ENCODE measurements at regions of chr1 and their contacts with region 1.

Region 1: GRCh38 chr1:36223993-36224536 is at the start of gene THRAP3:
- DNase-seq: peak; percentile 100
- H3K4me3 Mint-ChIP-seq: peak within 1 kb of the TSS; percentile 94
- H3K27ac Mint-ChIP-seq: peak within 1 kb of the TSS; percentile 99
- H3K4me1 Mint-ChIP-seq: peaks cover 32% of the 10 kb centered on the region
- H3K27me3 Mint-ChIP-seq: no peaks in the 10 kb centered on the region
- total RNA-seq, gene THRAP3: 128 to 133 TPM

Region 2: DNA sequence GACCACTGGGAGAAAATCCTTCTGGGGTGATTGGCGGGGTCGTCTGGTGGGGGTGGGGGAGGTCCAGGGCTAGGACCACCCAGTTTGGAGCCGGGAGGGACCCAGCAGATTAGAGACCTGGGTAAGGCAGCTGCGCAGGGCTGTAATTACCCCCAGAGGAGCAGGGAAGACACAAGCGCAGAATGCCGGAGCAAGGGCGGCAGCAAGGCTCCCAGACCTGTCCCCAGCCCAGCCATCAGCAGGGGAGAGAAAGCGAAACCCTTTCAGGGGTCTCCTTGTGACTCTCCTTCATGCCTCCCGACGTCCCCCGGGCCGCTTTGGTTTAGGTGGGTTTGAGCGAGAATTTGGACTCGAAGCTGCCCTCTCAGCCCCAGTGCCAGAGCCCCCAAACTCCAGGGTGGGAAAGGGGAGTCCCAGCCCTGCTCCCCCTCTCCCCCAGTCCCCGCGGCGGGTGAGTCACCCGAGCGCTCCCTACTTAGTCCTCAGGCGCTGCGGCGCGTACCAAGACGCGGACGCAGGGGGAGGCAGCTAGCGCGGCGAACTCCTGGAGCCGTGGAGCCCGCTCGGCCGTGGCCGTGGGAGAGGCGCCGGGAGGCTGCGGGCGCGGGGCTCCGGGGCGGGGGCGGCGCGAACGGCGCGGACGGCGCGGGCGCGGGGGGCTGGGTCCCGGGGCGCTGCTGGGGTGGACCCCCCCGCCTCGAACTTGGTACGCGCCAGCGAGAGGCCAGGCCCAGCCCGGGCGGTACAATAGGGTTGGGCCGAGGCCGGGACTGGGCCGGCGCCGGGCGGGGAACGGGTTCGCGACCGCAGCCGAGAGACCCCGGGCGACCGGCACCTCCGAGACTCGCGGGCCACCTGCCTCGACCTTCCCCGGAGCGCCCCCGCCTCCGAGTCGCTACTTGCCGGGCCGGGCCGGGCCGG is 68.4 kb before region 1 on chr1 and contains the start of gene MAP7D1:
- CTCF ChIA-PET with region 1: interaction called, 46 read pairs
- POLR2A ChIA-PET with region 1: interaction called, 72 read pairs
- DNase-seq: peak; percentile 86
- H3K4me3 Mint-ChIP-seq: peak within 1 kb of the TSS; percentile 88
- H3K27ac Mint-ChIP-seq: peak within 1 kb of the TSS; percentile 88
- H3K4me1 Mint-ChIP-seq: peaks cover 72% of the 10 kb centered on the region
- H3K27me3 Mint-ChIP-seq: no peaks in the 10 kb centered on the region
- total RNA-seq, gene MAP7D1: 215 to 221 TPM

Region 3: DNA sequence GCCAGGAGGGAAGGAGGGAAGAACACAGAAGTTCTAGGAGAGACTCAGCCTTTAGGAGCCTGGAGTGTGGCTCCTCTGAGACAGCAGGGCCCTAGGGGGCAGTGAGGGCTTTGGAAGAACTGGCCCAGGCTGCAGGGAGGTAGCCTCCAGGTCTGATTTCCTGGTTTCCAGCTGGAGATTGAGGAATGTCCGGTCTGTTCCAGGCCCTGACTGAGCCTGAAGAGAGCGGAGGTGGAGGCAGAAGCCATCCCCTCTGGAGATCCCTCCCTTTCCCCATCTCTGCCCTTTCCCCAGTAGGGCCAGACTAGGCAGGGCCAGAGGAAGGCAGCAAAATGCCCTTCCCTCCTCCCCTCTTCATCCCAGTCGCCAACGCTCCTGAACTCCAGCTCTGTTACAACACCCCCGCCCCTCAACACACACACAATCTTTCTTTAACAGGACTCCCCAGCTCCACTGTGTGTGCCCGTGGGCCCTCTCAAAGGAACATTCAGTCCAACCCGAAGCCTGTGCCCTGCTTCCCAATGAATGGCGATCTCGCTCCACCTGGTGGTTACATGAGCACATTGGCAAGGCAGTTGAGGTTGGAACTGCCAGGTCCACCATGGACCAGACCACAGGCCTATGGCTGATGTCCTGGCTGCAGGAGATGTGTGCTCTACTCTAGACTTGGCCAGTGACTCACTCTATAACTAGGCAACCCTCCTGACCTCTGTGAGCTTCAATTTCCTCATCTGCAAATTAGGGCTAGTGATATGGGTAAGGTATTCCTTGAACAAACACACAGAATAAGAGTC is 36.1 kb before region 1 on chr1:
- CTCF ChIA-PET with region 1: interaction called, 3 read pairs
- POLR2A ChIA-PET with region 1: interaction called, 12 read pairs
- DNase-seq: peak; percentile 84
- H3K4me3 Mint-ChIP-seq: no peak overlapping the region
- H3K27ac Mint-ChIP-seq: peak overlapping the region; percentile 38
- H3K4me1 Mint-ChIP-seq: peaks cover 8% of the 10 kb centered on the region
- H3K27me3 Mint-ChIP-seq: no peaks in the 10 kb centered on the region

Region 4: GRCh38 chr1:36248250-36248894 is 24.3 kb after region 1 on chr1:
- CTCF ChIA-PET with region 1: no interaction called
- POLR2A ChIA-PET with region 1: interaction called, 14 read pairs
- DNase-seq: no peak
- H3K4me3 Mint-ChIP-seq: no peak overlapping the region
- H3K27ac Mint-ChIP-seq: peak overlapping the region; percentile 22
- H3K4me1 Mint-ChIP-seq: peaks cover 33% of the 10 kb centered on the region
- H3K27me3 Mint-ChIP-seq: no peaks in the 10 kb centered on the region

Region 5: DNA sequence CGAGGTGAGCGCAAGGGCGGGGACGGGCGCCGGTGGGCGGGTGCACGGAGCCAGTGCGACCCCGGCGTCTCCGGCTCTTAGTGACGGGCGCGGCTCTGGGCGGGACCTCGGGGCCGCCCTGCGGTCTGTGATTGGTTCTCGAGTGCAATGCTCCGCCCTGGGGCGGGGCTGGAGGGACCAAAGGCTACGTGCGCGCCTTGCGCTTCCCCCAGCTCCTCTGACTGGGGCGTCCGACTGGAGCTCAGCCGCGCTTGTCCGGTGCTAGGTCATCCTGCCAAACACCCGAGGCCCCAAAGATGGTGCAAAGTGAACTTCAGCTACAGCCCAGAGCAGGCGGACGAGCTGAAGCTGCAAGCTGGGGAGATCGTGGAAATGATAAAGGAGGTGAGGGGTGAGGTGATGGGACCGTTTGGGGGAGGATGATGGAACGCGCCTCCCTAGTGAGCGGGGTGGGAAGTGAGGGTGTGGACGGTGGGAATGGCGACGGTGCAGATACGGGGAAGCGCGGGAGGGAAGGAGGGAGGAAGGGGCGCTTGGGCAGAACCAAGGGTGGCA is 82.9 kb after region 1 on chr1:
- CTCF ChIA-PET with region 1: interaction called, 4 read pairs
- POLR2A ChIA-PET with region 1: interaction called, 14 read pairs
- DNase-seq: peak; percentile 93
- H3K4me3 Mint-ChIP-seq: peak overlapping the region; percentile 89
- H3K27ac Mint-ChIP-seq: peak overlapping the region; percentile 81
- H3K4me1 Mint-ChIP-seq: peaks cover 40% of the 10 kb centered on the region
- H3K27me3 Mint-ChIP-seq: no peaks in the 10 kb centered on the region

Region 6: GRCh38 chr1:36482710-36483393 is 258.8 kb after region 1 on chr1 and contains the start of gene CSF3R:
- CTCF ChIA-PET with region 1: no interaction called
- POLR2A ChIA-PET with region 1: no interaction called
- DNase-seq: no peak
- H3K4me3 Mint-ChIP-seq: peak within 1 kb of the TSS; percentile 14
- H3K27ac Mint-ChIP-seq: no peak within 1 kb of the TSS
- H3K4me1 Mint-ChIP-seq: peaks cover 15% of the 10 kb centered on the region
- H3K27me3 Mint-ChIP-seq: peaks cover 19% of the 10 kb centered on the region
- total RNA-seq, gene CSF3R: 0.43 TPM

Measured in activated CD4-positive, alpha-beta memory T cell treated with anti-CD3 and anti-CD28 coated beads, Interleukin-2, amount 10 ng/mL, durations not matched to agents 7 days and 5 days (primary cell).